IMR-90 (cell line): ENCODE measurements at regions of chr18 and their contacts with region 1.

Region 1: DNA sequence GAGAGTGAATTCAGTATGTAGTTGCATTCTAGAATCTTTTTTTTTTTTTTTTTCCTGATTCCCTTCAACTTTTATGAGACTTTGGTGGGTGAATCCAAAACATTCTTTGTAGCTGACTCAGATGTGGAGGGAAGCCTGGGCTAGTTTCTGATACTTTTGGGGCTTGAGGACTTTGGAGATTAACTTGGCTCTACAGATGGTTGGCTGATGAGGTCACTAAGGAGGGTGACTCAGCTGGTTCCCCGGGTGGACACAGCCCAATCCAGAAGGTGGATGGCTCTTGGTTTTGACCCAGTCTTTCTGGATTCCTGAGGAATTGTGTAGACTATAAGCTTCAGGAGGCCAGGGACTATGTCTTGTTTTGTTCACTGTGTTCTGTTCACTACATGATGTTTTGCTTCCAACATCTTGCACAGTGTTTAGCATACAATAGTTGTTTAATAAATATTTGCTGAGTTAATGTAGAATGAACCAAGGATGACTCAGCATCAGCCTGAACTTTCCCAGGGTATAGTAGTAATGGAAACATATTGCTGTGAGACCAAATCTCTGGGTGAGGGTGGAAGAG is 30.5 kb downstream of the LAMA3 start:
- DNase-seq: peak; percentile 98
- ATAC-seq: peak; percentile 78
- H3K4me3 ChIP-seq: no peak overlapping the region
- H3K27ac ChIP-seq: peak overlapping the region; percentile 65
- H3K4me1 ChIP-seq: peaks cover 13% of the 10 kb centered on the region
- H3K27me3 ChIP-seq: no peaks in the 10 kb centered on the region
- CTCF ChIP-seq: no peak
- POLR2A ChIP-seq: no peak
- RAD21 ChIP-seq: no peak

Region 2: DNA sequence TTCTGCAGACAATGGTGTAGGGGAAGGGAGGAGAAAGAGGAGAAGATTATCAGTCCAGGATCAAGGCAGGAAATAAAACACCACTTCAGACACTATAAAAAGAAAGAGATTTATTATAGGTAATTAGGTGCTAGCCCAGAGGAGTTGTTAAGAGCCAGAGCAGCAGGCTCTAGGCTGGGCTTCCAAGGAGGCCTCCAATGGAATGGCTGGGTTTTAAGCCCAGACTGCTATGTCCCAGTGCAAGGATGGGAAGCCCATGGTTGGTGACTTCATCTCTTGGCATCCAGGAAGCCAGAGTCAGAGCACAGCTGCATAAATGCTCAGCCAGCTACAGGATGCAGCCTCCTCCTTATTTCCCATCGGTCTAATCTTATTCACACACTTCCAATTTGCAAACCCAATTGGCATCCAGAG is 65.1 kb after region 1 on chr18:
- CTCF ChIA-PET with region 1: no interaction called
- POLR2A ChIA-PET with region 1: no interaction called
- dilution Hi-C with region 1: no loop called
- in situ Hi-C with region 1: no loop called
- intact Hi-C with region 1: loop called (anchors 5 kb)
- DNase-seq: peak; percentile 93
- ATAC-seq: peak; percentile 97
- H3K4me3 ChIP-seq: no peak overlapping the region
- H3K27ac ChIP-seq: no peak overlapping the region
- H3K4me1 ChIP-seq: peaks cover 2% of the 10 kb centered on the region
- H3K27me3 ChIP-seq: no peaks in the 10 kb centered on the region
- CTCF ChIP-seq: no peak
- POLR2A ChIP-seq: no peak
- RAD21 ChIP-seq: no peak

Region 3: GRCh38 chr18:23861805-23862470 is 142.2 kb after region 1 on chr18:
- CTCF ChIA-PET with region 1: no interaction called
- POLR2A ChIA-PET with region 1: interaction called, 12 read pairs
- dilution Hi-C with region 1: no loop called
- in situ Hi-C with region 1: no loop called
- intact Hi-C with region 1: no loop called
- DNase-seq: peak; percentile 95
- ATAC-seq: peak; percentile 95
- H3K4me3 ChIP-seq: no peak overlapping the region
- H3K27ac ChIP-seq: peak overlapping the region; percentile 64
- H3K4me1 ChIP-seq: peaks cover 17% of the 10 kb centered on the region
- H3K27me3 ChIP-seq: no peaks in the 10 kb centered on the region
- CTCF ChIP-seq: no peak
- POLR2A ChIP-seq: no peak
- RAD21 ChIP-seq: no peak

Region 4: GRCh38 chr18:24913507-24914170 is 1193.9 kb after region 1 on chr18:
- CTCF ChIA-PET with region 1: no interaction called
- POLR2A ChIA-PET with region 1: no interaction called
- dilution Hi-C with region 1: no loop called
- in situ Hi-C with region 1: no loop called
- intact Hi-C with region 1: no loop called
- DNase-seq: no peak
- ATAC-seq: peak; percentile 58; the same call in 1 of the 2 replicates
- H3K4me3 ChIP-seq: no peak overlapping the region
- H3K27ac ChIP-seq: no peak overlapping the region
- H3K4me1 ChIP-seq: no peaks in the 10 kb centered on the region
- H3K27me3 ChIP-seq: peaks cover 50% of the 10 kb centered on the region
- CTCF ChIP-seq: no peak
- POLR2A ChIP-seq: no peak
- RAD21 ChIP-seq: no peak